PC-3 (cell line): ENCODE measurements at regions of chr10 and their contacts with region 1.

Region 1: DNA sequence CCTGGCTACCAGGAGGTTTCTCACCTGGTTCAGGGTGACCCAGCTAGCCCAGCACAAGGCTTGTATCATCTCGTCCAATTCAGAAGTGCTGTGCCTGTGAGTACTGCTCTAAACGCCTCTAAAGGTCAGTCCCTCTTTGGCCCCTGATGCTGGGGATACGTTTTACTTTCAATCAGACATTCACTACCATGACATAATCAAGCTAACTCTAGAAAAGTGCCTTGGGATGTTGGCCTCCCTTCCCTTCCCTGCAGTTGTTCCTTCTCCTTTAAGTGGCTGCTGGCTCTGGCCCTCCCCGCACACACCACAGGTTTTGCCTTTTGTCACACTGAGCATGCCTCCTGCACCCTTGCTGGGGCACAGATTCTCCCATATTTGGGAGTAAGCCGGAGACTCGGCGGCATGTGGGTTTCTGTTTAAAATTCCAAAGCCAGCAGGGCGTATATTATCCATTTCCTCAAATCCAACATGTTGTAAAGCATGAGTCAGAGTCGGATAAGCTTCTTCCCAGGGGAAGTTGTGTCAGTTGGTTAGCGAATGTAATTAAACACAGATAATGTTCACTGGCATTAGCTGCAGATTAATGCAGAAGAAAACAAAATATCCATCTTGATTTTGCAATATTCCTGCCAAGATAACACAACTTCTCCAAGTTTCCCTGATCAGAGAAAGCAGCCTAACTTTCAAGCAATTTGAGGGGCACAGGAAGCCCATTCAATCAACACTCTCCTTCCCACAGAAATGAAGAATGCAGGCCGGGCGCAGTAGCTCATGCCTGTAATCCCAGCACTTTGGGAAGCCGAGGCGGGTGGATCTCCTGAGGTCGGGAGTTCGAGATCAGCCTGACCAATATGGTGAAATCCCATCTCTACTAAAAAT is 31.8 kb upstream of the VCL start:
- DNase-seq: peak; percentile 100
- ATAC-seq: peak; percentile 98
- H3K4me3 ChIP-seq: peak overlapping the region; percentile 6
- H3K27ac ChIP-seq: peak overlapping the region; percentile 73
- H3K4me1 ChIP-seq: peaks cover 27% of the 10 kb centered on the region
- H3K27me3 ChIP-seq: no peaks in the 10 kb centered on the region
- CTCF ChIP-seq: no peak

Region 2: DNA sequence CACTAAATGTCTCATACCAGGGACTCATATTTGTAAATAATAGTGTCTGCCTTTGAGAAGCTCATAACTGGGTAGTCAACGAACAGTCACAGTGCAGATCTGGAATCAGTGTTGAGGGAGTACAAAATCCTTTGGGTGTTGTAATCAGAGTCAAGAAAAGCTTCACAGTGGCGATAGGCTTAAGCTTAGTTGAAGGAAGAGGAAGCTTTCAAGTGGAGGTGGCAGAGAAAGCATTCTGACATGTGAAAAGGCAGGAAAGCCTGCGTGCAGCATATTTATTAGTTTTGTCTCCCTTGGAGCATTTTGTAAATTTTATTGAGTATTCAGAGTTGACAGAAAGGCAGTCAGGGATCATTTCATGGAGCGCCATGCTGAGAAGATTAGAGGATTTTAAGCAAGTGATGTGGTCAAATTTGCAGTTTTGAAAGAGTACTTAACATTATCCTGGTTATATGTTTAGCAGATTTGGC is 289.8 kb after region 1 on chr10:
- CTCF ChIA-PET with region 1: interaction called, 13 read pairs
- POLR2A ChIA-PET with region 1: no interaction called
- intact Hi-C with region 1: no loop called
- DNase-seq: peak; percentile 79
- ATAC-seq: peak; percentile 68
- H3K4me3 ChIP-seq: no peak overlapping the region
- H3K27ac ChIP-seq: no peak overlapping the region
- H3K4me1 ChIP-seq: peaks cover 23% of the 10 kb centered on the region
- H3K27me3 ChIP-seq: no peaks in the 10 kb centered on the region
- CTCF ChIP-seq: no peak